CD4-positive, alpha-beta T cell (primary cell): ENCODE measurements at regions of chr2 and their contacts with region 1.

Region 1: DNA sequence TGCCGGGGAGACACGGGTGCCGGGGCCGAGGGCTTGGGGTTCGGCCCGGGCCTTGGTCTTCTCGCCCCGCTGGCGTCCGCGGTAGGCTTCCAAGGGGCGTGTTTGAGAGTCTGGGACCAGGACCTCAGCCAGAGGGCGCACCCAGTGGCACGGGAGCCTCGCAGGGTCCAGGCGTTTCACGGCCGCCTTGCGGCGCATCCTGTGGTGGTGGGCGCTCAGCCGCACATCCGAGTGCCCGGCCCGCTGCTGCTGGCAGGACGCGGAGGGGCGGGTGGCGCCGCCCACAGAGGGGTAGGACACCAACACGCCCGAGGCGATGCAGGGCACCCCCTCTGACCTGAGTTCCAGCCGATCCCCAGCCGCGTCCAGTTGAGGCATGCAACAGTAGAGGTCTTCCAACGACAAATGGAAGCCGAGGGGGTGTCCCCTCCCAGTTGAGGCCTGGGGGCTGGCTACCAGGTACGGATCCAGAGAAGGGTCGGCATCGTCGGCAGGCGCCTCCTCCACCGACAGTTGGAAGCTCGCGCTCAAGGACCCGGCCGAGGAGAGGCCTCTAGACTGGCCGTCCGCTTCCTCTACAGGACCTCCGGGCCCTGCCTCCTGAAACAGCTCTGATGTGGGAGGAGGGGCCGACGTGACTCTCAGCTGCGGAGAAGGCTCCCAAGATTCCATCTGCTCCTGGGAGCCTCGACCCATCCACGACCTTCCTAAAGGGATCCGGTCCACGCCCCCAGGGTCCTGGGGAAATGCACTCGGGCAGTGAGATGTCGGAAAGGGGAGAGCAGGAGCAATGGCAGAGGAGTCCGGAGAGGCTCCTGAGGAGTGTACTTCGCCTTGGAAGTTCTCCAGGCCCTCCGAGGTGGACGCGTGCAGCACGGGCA is 6.3 kb downstream of the C2orf81 start:
- DNase-seq: peak in 6 of 14 experiments; percentile 17 to 48 (median 38)
- ATAC-seq: peak; percentile 30
- H3K4me3 ChIP-seq: peak overlapping the region; percentile 49
- H3K4me3 Mint-ChIP-seq: peak overlapping the region; percentile 84
- H3K27ac ChIP-seq: no peak overlapping the region
- H3K27ac Mint-ChIP-seq: peak overlapping the region; percentile 71
- H3K4me1 ChIP-seq: peaks cover 25% of the 10 kb centered on the region
- H3K4me1 Mint-ChIP-seq: peaks cover 34% of the 10 kb centered on the region
- H3K27me3 ChIP-seq: peaks cover 0 to 16% of the 10 kb centered on the region in 2 experiments
- H3K27me3 Mint-ChIP-seq: no peaks in the 10 kb centered on the region
- CTCF ChIP-seq: no peak

Region 2: DNA sequence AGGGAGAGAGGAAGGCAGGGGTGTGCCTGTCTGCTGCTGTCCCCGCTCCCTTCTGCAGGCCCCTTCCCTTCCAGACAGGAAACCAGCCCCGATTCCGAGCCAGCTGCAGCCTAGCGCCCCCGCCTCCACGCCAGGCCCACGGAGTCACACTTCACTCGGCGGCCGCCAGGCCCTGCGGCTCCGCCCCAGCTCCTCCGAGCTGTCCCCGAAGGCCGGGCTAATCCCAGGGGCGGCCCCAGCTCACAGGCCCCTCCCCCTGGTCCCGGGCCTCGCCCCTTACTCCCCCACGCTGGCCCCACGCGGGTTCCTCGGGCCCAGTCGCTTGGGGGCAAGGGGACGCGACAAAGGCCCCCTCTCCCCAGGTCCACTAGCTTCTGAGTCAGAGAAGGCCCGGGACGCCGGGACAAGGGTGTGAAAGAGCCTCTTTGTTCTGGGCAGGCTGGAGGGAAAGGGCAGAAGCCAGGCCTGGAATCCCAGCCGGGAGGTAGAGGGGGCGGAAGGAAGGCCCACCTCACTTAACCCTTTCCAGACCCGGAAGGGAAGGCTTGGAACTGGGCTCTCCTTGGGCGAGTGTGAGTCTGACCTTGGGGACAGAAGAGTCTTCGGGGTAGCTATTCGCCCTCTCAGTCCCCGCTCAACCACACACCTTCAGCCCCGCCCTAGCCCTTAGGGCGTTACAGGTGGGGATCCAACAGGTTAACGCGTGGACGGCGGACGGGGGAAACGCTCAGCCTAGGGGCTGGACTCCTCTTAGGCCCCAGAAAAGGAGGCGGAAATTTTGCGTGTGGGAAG is 25.5 kb after region 1 on chr2:
- CTCF ChIA-PET with region 1: no interaction called
- POLR2A ChIA-PET with region 1: no interaction called
- intact Hi-C with region 1: loop called in 1 of 2 experiments (anchors 1 kb)
- DNase-seq: peak in 5 of 14 experiments; percentile 33 to 73 (median 48)
- ATAC-seq: peak; percentile 73
- H3K4me3 ChIP-seq: peak overlapping the region; percentile 10
- H3K4me3 Mint-ChIP-seq: peak overlapping the region; percentile 58
- H3K27ac ChIP-seq: no peak overlapping the region
- H3K27ac Mint-ChIP-seq: no peak overlapping the region
- H3K4me1 ChIP-seq: peaks cover 27% of the 10 kb centered on the region
- H3K4me1 Mint-ChIP-seq: peaks cover 8% of the 10 kb centered on the region
- H3K27me3 ChIP-seq: peaks cover 37 to 40% of the 10 kb centered on the region in 2 experiments
- H3K27me3 Mint-ChIP-seq: peaks cover 56% of the 10 kb centered on the region
- CTCF ChIP-seq: no peak